ENCODE measurements at regions of chr22 and their contacts with region 1.

Region 1: GRCh38 chr22:22156716-22157347 is 87.8 kb upstream of the VPREB1 start:
- DNase-seq: peak; percentile 82
- ATAC-seq: peak; percentile 94
- H3K4me3 Mint-ChIP-seq: no peak overlapping the region
- H3K27ac Mint-ChIP-seq: no peak overlapping the region
- H3K4me1 Mint-ChIP-seq: peaks cover 4% of the 10 kb centered on the region
- H3K27me3 Mint-ChIP-seq: peaks cover 7% of the 10 kb centered on the region

Region 2: GRCh38 chr22:21982338-21982965 is 174.4 kb before region 1 on chr22 and contains the start of gene TOP3B:
- CTCF ChIA-PET with region 1: interaction called, 4 read pairs
- POLR2A ChIA-PET with region 1: no interaction called
- intact Hi-C with region 1: loop called in 1 of 2 experiments (anchors 1 kb)
- DNase-seq: peak; percentile 91
- ATAC-seq: peak; percentile 95
- H3K4me3 Mint-ChIP-seq: peak within 1 kb of the TSS; percentile 88
- H3K27ac Mint-ChIP-seq: peak within 1 kb of the TSS; percentile 80
- H3K4me1 Mint-ChIP-seq: peaks cover 35% of the 10 kb centered on the region
- H3K27me3 Mint-ChIP-seq: no peaks in the 10 kb centered on the region
- total RNA-seq, gene TOP3B: 27.3 to 33.8 TPM

Region 3: DNA sequence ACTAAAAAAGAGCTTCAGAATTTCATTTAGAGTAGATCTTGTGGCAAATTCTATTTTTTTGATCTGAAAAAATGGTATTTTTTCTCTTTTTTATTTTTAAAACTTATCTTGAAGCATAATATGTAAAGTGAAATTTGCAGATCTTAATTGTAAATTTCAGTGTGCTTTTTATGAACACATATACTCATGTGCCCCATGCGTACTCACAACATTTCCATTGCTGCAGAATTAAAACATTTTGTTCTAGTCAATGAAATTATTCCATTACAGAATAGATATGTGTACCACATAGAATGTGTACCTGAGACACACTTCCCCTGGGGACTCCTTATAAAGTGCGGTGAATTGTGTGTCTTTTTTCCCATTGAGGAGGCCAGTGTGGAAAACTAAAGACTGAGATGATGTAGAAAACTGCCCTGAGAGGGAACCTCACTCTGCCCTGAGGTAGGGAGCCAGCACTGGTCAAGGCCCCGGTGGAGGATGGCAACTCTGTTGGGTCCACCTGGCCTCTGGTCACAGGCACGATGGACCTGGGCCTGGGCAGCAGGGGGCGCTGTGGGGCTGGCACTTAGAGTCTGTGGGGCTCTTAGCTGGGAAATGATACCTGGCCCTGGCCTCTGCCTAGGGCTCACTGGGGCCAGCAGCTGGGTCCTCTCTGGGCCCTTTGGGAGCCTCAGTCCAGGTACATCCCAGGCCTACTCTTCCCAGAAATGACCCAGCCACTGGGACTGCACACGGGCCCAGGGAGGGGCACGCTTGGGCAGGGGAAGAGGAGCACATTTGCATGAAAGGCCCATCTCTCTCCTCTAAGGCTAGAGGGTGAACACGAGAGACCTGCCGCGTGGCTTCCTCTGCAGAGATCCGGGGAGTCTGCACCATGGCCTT is 96.4 kb before region 1 on chr22:
- CTCF ChIA-PET with region 1: interaction called, 7 read pairs
- POLR2A ChIA-PET with region 1: no interaction called
- intact Hi-C with region 1: loop called in 1 of 2 experiments (anchors 2 kb)
- DNase-seq: peak; percentile 87
- ATAC-seq: peak; percentile 88
- H3K4me3 Mint-ChIP-seq: no peak overlapping the region
- H3K27ac Mint-ChIP-seq: no peak overlapping the region
- H3K4me1 Mint-ChIP-seq: no peaks in the 10 kb centered on the region
- H3K27me3 Mint-ChIP-seq: peaks cover 22% of the 10 kb centered on the region

Region 4: GRCh38 chr22:22103078-22103875 is 53.6 kb before region 1 on chr22:
- CTCF ChIA-PET with region 1: no interaction called
- POLR2A ChIA-PET with region 1: no interaction called
- intact Hi-C with region 1: loop called in 1 of 2 experiments (anchors 5 kb)
- DNase-seq: peak; percentile 53
- ATAC-seq: peak; percentile 72
- H3K4me3 Mint-ChIP-seq: no peak overlapping the region
- H3K27ac Mint-ChIP-seq: no peak overlapping the region
- H3K4me1 Mint-ChIP-seq: no peaks in the 10 kb centered on the region
- H3K27me3 Mint-ChIP-seq: peaks cover 10% of the 10 kb centered on the region

Region 5: GRCh38 chr22:22168190-22168940 is 11.5 kb after region 1 on chr22:
- CTCF ChIA-PET with region 1: interaction called, 15 read pairs
- POLR2A ChIA-PET with region 1: no interaction called
- intact Hi-C with region 1: no loop called
- DNase-seq: peak; percentile 20
- ATAC-seq: peak; percentile 61
- H3K4me3 Mint-ChIP-seq: peak overlapping the region; percentile 54
- H3K27ac Mint-ChIP-seq: peak overlapping the region; percentile 33
- H3K4me1 Mint-ChIP-seq: peaks cover 10% of the 10 kb centered on the region
- H3K27me3 Mint-ChIP-seq: no peaks in the 10 kb centered on the region

Region 6: GRCh38 chr22:22195265-22196017 is 38.6 kb after region 1 on chr22:
- CTCF ChIA-PET with region 1: interaction called, 9 read pairs
- POLR2A ChIA-PET with region 1: no interaction called
- intact Hi-C with region 1: loop called in 1 of 2 experiments (anchors 2 kb)
- DNase-seq: peak; percentile 92
- ATAC-seq: peak; percentile 94
- H3K4me3 Mint-ChIP-seq: no peak overlapping the region
- H3K27ac Mint-ChIP-seq: no peak overlapping the region
- H3K4me1 Mint-ChIP-seq: no peaks in the 10 kb centered on the region
- H3K27me3 Mint-ChIP-seq: peaks cover 13% of the 10 kb centered on the region